ENCODE measurements at regions of chr3 and their contacts with region 1.

Region 1: GRCh38 chr3:27712136-27713077 is 9.7 kb downstream of the EOMES start:
- DNase-seq: peak; percentile 71 to 88 (median 75)
- H3K4me3 ChIP-seq: peak overlapping the region; percentile 84
- H3K4me3 Mint-ChIP-seq: peak overlapping the region; percentile 95 to 100 (median 99)
- H3K27ac ChIP-seq: peak overlapping the region; percentile 72
- H3K27ac Mint-ChIP-seq: peak overlapping the region; percentile 85 to 99 (median 96)
- H3K4me1 ChIP-seq: peaks cover 17% of the 10 kb centered on the region
- H3K4me1 Mint-ChIP-seq: peaks cover 30 to 49% (median 37%) of the 10 kb centered on the region in 3 donors
- H3K27me3 ChIP-seq: no peaks in the 10 kb centered on the region
- H3K27me3 Mint-ChIP-seq: peaks cover 5 to 10% of the 10 kb centered on the region in 2 donors

Region 2: DNA sequence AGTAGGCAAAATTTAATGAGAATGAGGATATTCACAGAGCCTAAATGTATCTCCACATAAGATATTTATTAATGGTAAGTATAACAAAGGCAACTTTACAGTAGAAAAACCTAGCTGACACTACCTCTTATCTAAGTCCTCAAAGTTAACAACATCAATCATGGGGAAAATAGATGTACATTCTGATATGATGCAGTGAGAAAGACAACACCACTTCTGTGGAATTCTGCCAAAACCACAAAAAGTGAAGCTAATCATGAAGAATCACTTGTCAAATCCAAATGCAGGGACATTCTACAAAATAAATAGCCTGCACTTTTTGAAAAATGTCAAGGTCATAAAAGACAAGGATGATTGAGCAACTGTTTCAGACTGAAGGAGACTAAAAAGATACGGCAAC is 37.2 kb after region 1 on chr3:
- CTCF ChIA-PET with region 1: no interaction called
- POLR2A ChIA-PET with region 1: no interaction called
- DNase-seq: no peak
- H3K4me3 ChIP-seq: no peak overlapping the region
- H3K4me3 Mint-ChIP-seq: no peak overlapping the region
- H3K27ac ChIP-seq: no peak overlapping the region
- H3K27ac Mint-ChIP-seq: peak overlapping the region in 1 of 8 donors; percentile 30
- H3K4me1 ChIP-seq: no peaks in the 10 kb centered on the region
- H3K4me1 Mint-ChIP-seq: peaks cover 19 to 26% (median 23%) of the 10 kb centered on the region in 3 donors
- H3K27me3 ChIP-seq: no peaks in the 10 kb centered on the region
- H3K27me3 Mint-ChIP-seq: no peaks in the 10 kb centered on the region

Region 3: GRCh38 chr3:27905625-27906024 is 193.2 kb after region 1 on chr3:
- CTCF ChIA-PET with region 1: interaction called, 11 read pairs
- POLR2A ChIA-PET with region 1: no interaction called
- DNase-seq: peak in 4 of 5 donors; percentile 20 to 78 (median 46)
- H3K4me3 ChIP-seq: no peak overlapping the region
- H3K4me3 Mint-ChIP-seq: peak overlapping the region in 4 of 7 donors; percentile 15 to 61 (median 37)
- H3K27ac ChIP-seq: no peak overlapping the region
- H3K27ac Mint-ChIP-seq: peak overlapping the region in 6 of 8 donors; percentile 10 to 70 (median 52)
- H3K4me1 ChIP-seq: peaks cover 43% of the 10 kb centered on the region
- H3K4me1 Mint-ChIP-seq: peaks cover 50 to 61% (median 60%) of the 10 kb centered on the region in 3 donors
- H3K27me3 ChIP-seq: no peaks in the 10 kb centered on the region
- H3K27me3 Mint-ChIP-seq: no peaks in the 10 kb centered on the region

Region 4: DNA sequence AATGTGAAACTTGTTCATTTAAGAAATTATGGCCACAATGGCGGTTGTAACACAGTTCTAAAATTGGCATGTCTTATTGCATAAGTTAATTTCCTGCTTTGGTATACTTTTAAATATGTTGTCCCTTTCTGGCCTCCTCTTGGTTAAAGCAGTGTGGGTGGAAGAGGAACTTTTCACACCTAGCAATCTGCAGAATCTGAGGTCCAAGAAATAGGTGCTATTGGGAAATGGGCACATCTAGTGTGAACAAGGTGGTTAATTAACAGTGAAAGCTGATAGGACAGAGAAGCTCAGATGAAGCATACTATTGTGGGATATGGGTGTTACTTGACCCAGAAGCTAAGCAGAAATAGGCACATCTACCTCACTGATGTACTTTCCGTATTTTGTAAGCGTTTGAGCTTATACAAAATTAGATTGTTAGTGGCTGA is 539.6 kb after region 1 on chr3:
- CTCF ChIA-PET with region 1: interaction called, 14 read pairs
- POLR2A ChIA-PET with region 1: interaction called, 3 read pairs
- DNase-seq: peak in 1 of 5 donors; percentile 76
- H3K4me3 ChIP-seq: no peak overlapping the region
- H3K4me3 Mint-ChIP-seq: peak overlapping the region; percentile 35 to 80 (median 63)
- H3K27ac ChIP-seq: no peak overlapping the region
- H3K27ac Mint-ChIP-seq: peak overlapping the region; percentile 71 to 92 (median 81)
- H3K4me1 ChIP-seq: peaks cover 49% of the 10 kb centered on the region
- H3K4me1 Mint-ChIP-seq: peaks cover 76 to 94% (median 90%) of the 10 kb centered on the region in 3 donors
- H3K27me3 ChIP-seq: no peaks in the 10 kb centered on the region
- H3K27me3 Mint-ChIP-seq: no peaks in the 10 kb centered on the region

Region 5: GRCh38 chr3:28308196-28308595 is 595.8 kb after region 1 on chr3:
- CTCF ChIA-PET with region 1: interaction called, 10 read pairs
- POLR2A ChIA-PET with region 1: no interaction called
- DNase-seq: no peak
- H3K4me3 ChIP-seq: no peak overlapping the region
- H3K4me3 Mint-ChIP-seq: peak overlapping the region in 1 of 7 donors; percentile 14
- H3K27ac ChIP-seq: no peak overlapping the region
- H3K27ac Mint-ChIP-seq: peak overlapping the region in 1 of 8 donors; percentile 42
- H3K4me1 ChIP-seq: no peaks in the 10 kb centered on the region
- H3K4me1 Mint-ChIP-seq: peaks cover 40 to 72% (median 70%) of the 10 kb centered on the region in 3 donors
- H3K27me3 ChIP-seq: no peaks in the 10 kb centered on the region
- H3K27me3 Mint-ChIP-seq: no peaks in the 10 kb centered on the region

Region 6: DNA sequence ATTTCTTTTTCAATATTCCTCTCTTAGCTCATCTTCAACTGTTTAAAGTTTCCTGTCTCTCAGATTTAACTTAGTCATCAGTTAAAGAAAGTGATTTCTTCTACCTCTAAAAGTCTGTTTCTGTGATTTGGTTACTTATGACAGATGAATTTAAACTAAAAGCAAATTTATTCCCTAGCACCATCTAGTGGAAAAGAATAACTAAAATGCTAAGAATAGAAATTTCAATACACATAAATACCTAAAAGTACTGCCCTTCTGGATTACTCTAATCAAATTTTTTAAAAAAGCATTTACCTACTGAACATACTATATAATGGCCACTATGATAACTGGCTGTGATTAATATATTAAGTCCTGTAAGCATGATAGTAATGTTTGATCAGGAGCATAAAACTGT is 622.1 kb after region 1 on chr3:
- CTCF ChIA-PET with region 1: interaction called, 130 read pairs
- POLR2A ChIA-PET with region 1: interaction called, 14 read pairs
- DNase-seq: no peak
- H3K4me3 ChIP-seq: no peak overlapping the region
- H3K4me3 Mint-ChIP-seq: no peak overlapping the region
- H3K27ac ChIP-seq: no peak overlapping the region
- H3K27ac Mint-ChIP-seq: peak overlapping the region in 2 of 8 donors; percentile 13 to 64
- H3K4me1 ChIP-seq: peaks cover 6% of the 10 kb centered on the region
- H3K4me1 Mint-ChIP-seq: peaks cover 5 to 25% (median 25%) of the 10 kb centered on the region in 3 donors
- H3K27me3 ChIP-seq: no peaks in the 10 kb centered on the region
- H3K27me3 Mint-ChIP-seq: no peaks in the 10 kb centered on the region

Measured in CD8-positive, alpha-beta memory T cell (primary cell).